Dorsolateral prefrontal cortex (tissue), 120 donors: ENCODE measurements at regions of chr1 and their contacts with region 1.

Region 1: GRCh38 chr1:40979233-40980067 is at the start of gene CTPS1:
- DNase-seq: peak; percentile 92 to 98 (median 94)
- H3K4me3 ChIP-seq: peak within 1 kb of the TSS; percentile 43 to 94 (median 78)
- H3K27ac ChIP-seq: peak within 1 kb of the TSS; percentile 60 to 99 (median 95)
- H3K27me3 ChIP-seq: no peaks in the 10 kb centered on the region
- CTCF ChIP-seq: peak in 33 of 56 donors; percentile 1 to 51 (median 24)
- total RNA-seq, gene CTPS1: 15.1 to 36.8 (median 22.8) TPM

Region 2: GRCh38 chr1:41003640-41004220 is 24.3 kb after region 1 on chr1:
- intact Hi-C with region 1: loop called in 1 of 2 experiments (anchors 1 kb)
- DNase-seq: peak; percentile 83 to 99 (median 94)
- H3K4me3 ChIP-seq: peak overlapping the region in 3 of 59 donors; percentile 15 to 26 (median 25)
- H3K27ac ChIP-seq: peak overlapping the region in 58 of 59 donors; percentile 11 to 88 (median 72)
- H3K27me3 ChIP-seq: no peaks in the 10 kb centered on the region
- CTCF ChIP-seq: peak; percentile 46 to 83 (median 70)

Region 3: GRCh38 chr1:41109316-41110197 is 130.1 kb after region 1 on chr1:
- intact Hi-C with region 1: loop called in 1 of 2 experiments (anchors 10 kb)
- DNase-seq: peak in 1 of 10 donors; percentile 14
- H3K4me3 ChIP-seq: no peak overlapping the region
- H3K27ac ChIP-seq: peak overlapping the region in 46 of 59 donors; percentile 1 to 84 (median 54)
- H3K27me3 ChIP-seq: no peaks in the 10 kb centered on the region
- CTCF ChIP-seq: no peak

Region 4: DNA sequence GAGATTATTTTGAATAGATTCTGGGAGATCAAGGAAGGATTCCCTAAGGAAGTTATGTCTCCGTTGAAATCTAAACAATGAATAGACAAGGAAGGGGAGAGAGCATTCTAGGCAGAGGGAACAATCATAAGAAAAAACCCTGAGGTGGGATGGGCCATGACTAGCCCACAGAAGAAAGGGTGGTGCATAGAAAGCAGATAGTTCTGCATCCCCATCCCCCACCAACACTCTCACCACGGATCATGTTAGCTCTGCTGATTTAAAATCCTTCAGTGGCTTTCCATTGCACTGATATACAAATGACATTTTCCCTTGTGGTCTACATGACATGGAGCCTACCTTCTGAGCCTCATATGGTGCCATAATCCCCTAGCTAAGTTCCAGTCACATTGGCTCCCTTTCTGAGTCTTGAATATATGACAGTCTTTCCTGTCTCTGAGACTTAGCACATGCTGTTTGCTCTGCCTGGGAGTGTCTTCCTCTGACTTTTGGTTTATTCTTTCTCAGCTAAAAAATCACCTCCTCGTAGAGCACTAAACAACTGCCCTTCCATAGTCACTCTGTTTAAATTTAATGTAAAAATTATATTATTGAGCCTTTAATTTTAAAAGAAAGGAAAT is 247.5 kb after region 1 on chr1:
- intact Hi-C with region 1: no loop called
- DNase-seq: no peak
- H3K4me3 ChIP-seq: no peak overlapping the region
- H3K27ac ChIP-seq: no peak overlapping the region
- H3K27me3 ChIP-seq: no peaks in the 10 kb centered on the region
- CTCF ChIP-seq: no peak